PC-9 (cell line): ENCODE measurements at regions of chr22 and their contacts with region 1.

Region 1: GRCh38 chr22:43363315-43364168 is 20.4 kb upstream of the SCUBE1 start:
- DNase-seq: no peak
- H3K4me3 ChIP-seq: no peak overlapping the region
- H3K27ac ChIP-seq: no peak overlapping the region
- H3K4me1 ChIP-seq: no peaks in the 10 kb centered on the region
- H3K27me3 ChIP-seq: peaks cover 97% of the 10 kb centered on the region
- CTCF ChIP-seq: no peak

Region 2: DNA sequence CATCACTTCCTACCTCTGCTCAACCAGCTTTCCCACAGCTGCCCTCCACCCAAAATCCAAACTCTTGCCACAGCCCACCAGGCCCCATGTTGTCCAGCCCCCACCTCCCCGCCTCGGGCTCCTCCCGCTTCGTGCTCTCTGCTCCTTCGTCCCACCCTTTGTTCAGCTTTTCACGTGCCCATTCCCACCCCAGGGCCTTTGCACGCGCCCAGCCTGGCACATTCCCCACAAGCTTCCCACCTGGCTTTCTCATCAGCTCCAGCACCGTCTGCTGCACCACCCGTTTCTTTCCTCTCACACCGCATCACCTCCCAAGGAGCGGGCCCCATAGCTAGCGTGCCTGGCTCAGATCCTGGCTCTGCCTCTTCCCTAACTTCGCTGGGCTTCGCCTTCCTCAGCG is 75.2 kb before region 1 on chr22:
- CTCF ChIA-PET with region 1: no interaction called
- POLR2A ChIA-PET with region 1: interaction called, 10 read pairs
- intact Hi-C with region 1: no loop called
- DNase-seq: no peak
- H3K4me3 ChIP-seq: no peak overlapping the region
- H3K27ac ChIP-seq: no peak overlapping the region
- H3K4me1 ChIP-seq: no peaks in the 10 kb centered on the region
- H3K27me3 ChIP-seq: peaks cover 60% of the 10 kb centered on the region
- CTCF ChIP-seq: no peak

Region 3: DNA sequence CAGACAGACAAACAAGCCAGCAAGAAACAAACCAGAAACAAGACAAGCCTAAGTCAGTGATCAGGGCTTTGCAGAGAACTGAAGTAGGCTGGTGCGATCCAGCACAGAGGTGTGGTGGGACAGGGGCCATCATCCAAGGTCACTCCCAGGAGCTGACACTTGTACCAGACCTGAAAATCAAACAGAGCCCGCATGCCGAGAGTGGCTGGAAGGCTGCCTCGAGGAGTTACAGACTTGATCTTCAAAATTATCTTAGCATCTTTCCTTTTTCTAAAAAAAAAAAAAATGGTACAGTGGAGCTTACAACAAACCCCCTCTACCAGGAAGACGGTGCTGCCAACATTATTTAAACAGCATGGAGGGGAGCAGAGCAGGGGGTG is 11.6 kb before region 1 on chr22:
- CTCF ChIA-PET with region 1: interaction called, 10 read pairs
- POLR2A ChIA-PET with region 1: no interaction called
- intact Hi-C with region 1: no loop called
- DNase-seq: no peak
- H3K4me3 ChIP-seq: no peak overlapping the region
- H3K27ac ChIP-seq: no peak overlapping the region
- H3K4me1 ChIP-seq: no peaks in the 10 kb centered on the region
- H3K27me3 ChIP-seq: peaks cover 80% of the 10 kb centered on the region
- CTCF ChIP-seq: no peak

Region 4: GRCh38 chr22:43404673-43405385 is 41.3 kb after region 1 on chr22:
- CTCF ChIA-PET with region 1: interaction called, 10 read pairs
- POLR2A ChIA-PET with region 1: no interaction called
- intact Hi-C with region 1: no loop called
- DNase-seq: peak in 1 of 2 experiments; percentile 67
- H3K4me3 ChIP-seq: no peak overlapping the region
- H3K27ac ChIP-seq: no peak overlapping the region
- H3K4me1 ChIP-seq: no peaks in the 10 kb centered on the region
- H3K27me3 ChIP-seq: peaks cover 97% of the 10 kb centered on the region
- CTCF ChIP-seq: no peak